Heart left ventricle (tissue), 16 donors: ENCODE measurements at regions of chr10 and their contacts with region 1.

Region 1: DNA sequence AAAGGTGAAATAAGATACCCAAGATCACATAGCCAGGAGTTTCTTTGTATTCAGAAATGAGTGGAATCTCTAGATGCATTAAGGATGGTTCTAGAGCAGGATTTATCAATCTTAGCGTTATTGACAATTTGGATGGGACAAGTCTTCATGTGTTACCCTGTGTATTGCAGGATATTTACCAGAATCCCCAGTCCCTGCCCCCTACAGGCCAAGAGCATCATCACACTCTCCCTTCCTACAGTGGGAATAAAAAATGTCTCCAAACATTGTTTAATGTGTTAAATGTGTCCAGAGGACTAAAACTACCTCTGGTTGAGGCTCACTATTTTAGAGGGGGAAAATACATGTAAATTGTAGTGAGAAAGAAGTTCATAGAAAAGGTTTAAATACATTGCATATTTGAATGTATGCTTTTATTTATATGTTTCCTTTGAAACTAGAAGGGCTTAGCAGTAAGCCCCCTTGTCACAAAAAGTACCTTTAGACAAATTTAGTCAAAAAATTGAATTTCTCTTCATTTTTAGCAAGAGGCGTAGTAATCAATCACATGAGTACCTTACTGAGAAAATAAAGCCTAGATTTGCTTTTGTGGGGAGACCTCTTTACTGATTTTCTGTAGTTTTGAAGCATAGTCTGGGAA is 141.2 kb downstream of the MLLT10 start:
- DNase-seq: no peak
- ATAC-seq: peak in 1 of 4 donors; percentile 36
- H3K4me3 ChIP-seq: no peak overlapping the region
- H3K27ac ChIP-seq: no peak overlapping the region
- H3K4me1 ChIP-seq: peaks cover 0 to 19% (median 5%) of the 10 kb centered on the region in 12 donors
- H3K27me3 ChIP-seq: no peaks in the 10 kb centered on the region
- CTCF ChIP-seq: peak; percentile 54 to 75 (median 68)
- POLR2A ChIP-seq: no peak

Region 2: GRCh38 chr10:19833170-19833824 is 1842.0 kb before region 1 on chr10:
- intact Hi-C with region 1: no loop called
- DNase-seq: no peak
- ATAC-seq: no peak
- H3K4me3 ChIP-seq: no peak overlapping the region
- H3K27ac ChIP-seq: peak overlapping the region in 1 of 12 donors; percentile 74
- H3K4me1 ChIP-seq: peaks cover 0 to 53% (median 22%) of the 10 kb centered on the region in 12 donors
- H3K27me3 ChIP-seq: no peaks in the 10 kb centered on the region
- CTCF ChIP-seq: no peak
- POLR2A ChIP-seq: no peak

Region 3: GRCh38 chr10:21516242-21517131 is 158.8 kb before region 1 on chr10:
- intact Hi-C with region 1: loop called in 1 of 10 experiments (anchors 10 kb)
- DNase-seq: peak; percentile 56 to 83 (median 63)
- ATAC-seq: peak in 3 of 4 donors; percentile 37 to 71 (median 47)
- H3K4me3 ChIP-seq: peak overlapping the region; percentile 52 to 80 (median 70)
- H3K27ac ChIP-seq: peak overlapping the region; percentile 47 to 90 (median 84)
- H3K4me1 ChIP-seq: peaks cover 0 to 48% (median 15%) of the 10 kb centered on the region in 12 donors
- H3K27me3 ChIP-seq: peaks cover 0 to 59% (median 0%) of the 10 kb centered on the region in 9 donors
- CTCF ChIP-seq: no peak
- POLR2A ChIP-seq: no peak

Region 4: DNA sequence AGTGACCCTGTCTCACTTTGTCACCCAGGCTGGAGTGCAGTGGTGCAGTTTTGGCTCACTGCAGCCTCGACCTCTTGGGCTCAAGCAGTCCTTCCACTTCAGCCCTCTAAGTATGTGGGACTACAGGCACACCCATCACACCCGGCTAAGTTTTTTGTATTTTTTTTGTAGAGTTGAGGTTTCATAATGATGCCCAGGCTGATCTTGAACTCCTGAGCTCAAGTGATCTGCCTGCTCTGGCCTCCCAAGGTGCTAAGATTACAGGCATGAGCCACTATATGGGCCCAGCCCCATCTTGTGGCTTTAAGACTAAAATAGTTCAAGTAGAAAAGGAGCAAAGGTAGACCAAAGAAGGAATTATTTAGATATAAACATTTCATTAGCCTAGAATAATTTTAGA is 75.7 kb before region 1 on chr10:
- intact Hi-C with region 1: no loop called
- DNase-seq: no peak
- ATAC-seq: no peak
- H3K4me3 ChIP-seq: no peak overlapping the region
- H3K27ac ChIP-seq: no peak overlapping the region
- H3K4me1 ChIP-seq: peaks cover 0 to 30% (median 0%) of the 10 kb centered on the region in 12 donors
- H3K27me3 ChIP-seq: no peaks in the 10 kb centered on the region
- CTCF ChIP-seq: no peak
- POLR2A ChIP-seq: no peak

Region 5: GRCh38 chr10:21626457-21627161 is 48.7 kb before region 1 on chr10:
- intact Hi-C with region 1: no loop called
- DNase-seq: no peak
- ATAC-seq: peak in 1 of 4 donors; percentile 45
- H3K4me3 ChIP-seq: no peak overlapping the region
- H3K27ac ChIP-seq: no peak overlapping the region
- H3K4me1 ChIP-seq: peaks cover 0 to 18% (median 7%) of the 10 kb centered on the region in 12 donors
- H3K27me3 ChIP-seq: no peaks in the 10 kb centered on the region
- CTCF ChIP-seq: no peak
- POLR2A ChIP-seq: no peak

Region 6: DNA sequence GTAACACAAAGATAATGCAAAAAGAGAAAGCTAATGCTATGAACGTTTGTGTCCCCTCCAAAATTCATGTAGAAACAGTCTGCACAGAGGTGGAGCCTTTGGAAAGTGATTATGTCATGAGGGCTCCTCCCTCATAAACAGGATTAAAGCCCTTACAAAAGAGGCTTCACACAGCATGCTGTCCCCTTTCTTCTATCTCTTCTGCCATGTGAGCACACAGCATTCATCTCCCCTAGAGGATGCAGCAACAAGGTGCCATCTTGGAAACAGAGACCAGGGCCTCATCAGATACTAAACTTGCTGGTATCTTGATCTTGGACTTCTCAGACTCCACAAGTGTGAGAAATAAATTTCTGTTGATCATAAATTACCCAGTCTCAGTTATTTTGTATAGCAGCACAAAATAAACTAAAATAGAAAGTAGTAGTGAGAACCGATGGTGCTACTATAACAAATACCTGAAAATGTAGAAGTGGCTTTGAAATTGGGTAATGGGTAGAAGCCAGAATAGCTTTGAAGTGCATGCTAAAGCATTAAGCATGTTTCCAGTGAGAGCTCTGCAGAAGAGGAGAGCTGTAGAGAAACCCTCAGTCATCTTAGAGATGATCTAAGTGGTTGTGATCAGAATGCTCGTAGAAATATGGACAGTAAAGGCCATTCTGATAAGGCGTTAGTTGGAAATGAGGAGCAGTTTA is 219.5 kb after region 1 on chr10:
- intact Hi-C with region 1: no loop called
- DNase-seq: no peak
- ATAC-seq: no peak
- H3K4me3 ChIP-seq: no peak overlapping the region
- H3K27ac ChIP-seq: no peak overlapping the region
- H3K4me1 ChIP-seq: no peaks in the 10 kb centered on the region
- H3K27me3 ChIP-seq: no peaks in the 10 kb centered on the region
- CTCF ChIP-seq: no peak
- POLR2A ChIP-seq: no peak